ENCODE measurements at regions of chr1 and their contacts with region 1.

Region 1: GRCh38 chr1:18902523-18903290 is at the start of gene ALDH4A1:
- DNase-seq: peak; percentile 98
- ATAC-seq: peak; percentile 89
- H3K4me3 ChIP-seq: peak within 1 kb of the TSS; percentile 81 to 95 (median 94)
- H3K27ac ChIP-seq: peak within 1 kb of the TSS; percentile 95
- H3K4me1 ChIP-seq: peaks cover 45% of the 10 kb centered on the region
- H3K27me3 ChIP-seq: no peaks in the 10 kb centered on the region
- CTCF ChIP-seq: peak; percentile 47
- EP300 ChIP-seq: no peak
- POLR2A ChIP-seq: peak; percentile 75 to 77
- RAD21 ChIP-seq: 0 out of 2 replicates have a peak, but pooled peaks have one; percentile 7
- total RNA-seq, gene ALDH4A1: 58.5 and 76.4 TPM in 2 replicates

Region 2: GRCh38 chr1:18883636-18884418 is 18.9 kb before region 1 on chr1:
- CTCF ChIA-PET with region 1: interaction called, 14 read pairs
- POLR2A ChIA-PET with region 1: interaction called, 13 read pairs
- in situ Hi-C with region 1: no loop called
- intact Hi-C with region 1: loop called (anchors 2 kb)
- DNase-seq: peak; percentile 51
- ATAC-seq: peak; percentile 79
- H3K4me3 ChIP-seq: no peak overlapping the region
- H3K27ac ChIP-seq: no peak overlapping the region
- H3K4me1 ChIP-seq: no peaks in the 10 kb centered on the region
- H3K27me3 ChIP-seq: no peaks in the 10 kb centered on the region
- CTCF ChIP-seq: peak; percentile 88
- EP300 ChIP-seq: no peak
- POLR2A ChIP-seq: no peak
- RAD21 ChIP-seq: peak; percentile 89

Region 3: DNA sequence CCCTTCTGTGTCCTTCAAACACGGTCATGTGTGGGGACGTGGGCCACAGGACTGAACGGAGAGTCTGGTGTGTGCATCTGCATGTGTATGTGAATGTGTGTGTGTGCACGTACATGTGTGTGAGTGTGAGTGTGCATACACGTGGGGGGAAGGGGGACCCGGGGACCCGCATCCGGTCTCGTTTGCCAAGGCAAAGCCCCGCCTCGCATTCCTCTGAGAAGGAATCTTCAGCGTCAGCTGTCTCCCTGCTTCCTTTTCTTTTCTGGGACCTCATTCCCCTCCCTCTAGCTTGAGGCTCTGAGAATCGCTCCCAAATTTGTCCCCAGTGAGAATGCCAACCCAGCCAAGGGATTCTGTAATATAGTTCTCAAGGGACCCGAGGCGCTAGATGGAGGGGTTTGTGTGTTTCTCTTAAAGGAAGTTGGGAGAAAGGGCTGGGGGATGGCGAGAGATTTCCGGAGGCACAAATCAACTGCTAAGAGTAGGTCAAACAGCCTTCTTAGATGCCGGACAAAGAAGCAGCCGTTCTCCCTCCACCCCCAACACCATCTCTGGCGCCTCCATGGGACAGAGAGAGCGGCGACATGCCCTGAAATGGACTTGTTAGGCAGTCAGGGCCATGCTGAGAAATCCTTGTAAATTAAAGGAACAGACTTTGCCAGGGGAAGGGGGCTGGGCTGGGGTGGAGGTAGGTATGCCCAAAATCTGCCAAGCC is 47.1 kb after region 1 on chr1:
- CTCF ChIA-PET with region 1: no interaction called
- POLR2A ChIA-PET with region 1: interaction called, 4 read pairs
- in situ Hi-C with region 1: loop called (anchors 5 kb)
- intact Hi-C with region 1: loop called (anchors 2 kb)
- DNase-seq: peak; percentile 48
- ATAC-seq: peak; percentile 54
- H3K4me3 ChIP-seq: peak overlapping the region; percentile 53 to 75 (median 73)
- H3K27ac ChIP-seq: peak overlapping the region; percentile 93
- H3K4me1 ChIP-seq: peaks cover 95% of the 10 kb centered on the region
- H3K27me3 ChIP-seq: no peaks in the 10 kb centered on the region
- CTCF ChIP-seq: peak; percentile 45
- EP300 ChIP-seq: no peak
- POLR2A ChIP-seq: no peak
- RAD21 ChIP-seq: no peak; the same call in 1 of the 2 replicates

Region 4: DNA sequence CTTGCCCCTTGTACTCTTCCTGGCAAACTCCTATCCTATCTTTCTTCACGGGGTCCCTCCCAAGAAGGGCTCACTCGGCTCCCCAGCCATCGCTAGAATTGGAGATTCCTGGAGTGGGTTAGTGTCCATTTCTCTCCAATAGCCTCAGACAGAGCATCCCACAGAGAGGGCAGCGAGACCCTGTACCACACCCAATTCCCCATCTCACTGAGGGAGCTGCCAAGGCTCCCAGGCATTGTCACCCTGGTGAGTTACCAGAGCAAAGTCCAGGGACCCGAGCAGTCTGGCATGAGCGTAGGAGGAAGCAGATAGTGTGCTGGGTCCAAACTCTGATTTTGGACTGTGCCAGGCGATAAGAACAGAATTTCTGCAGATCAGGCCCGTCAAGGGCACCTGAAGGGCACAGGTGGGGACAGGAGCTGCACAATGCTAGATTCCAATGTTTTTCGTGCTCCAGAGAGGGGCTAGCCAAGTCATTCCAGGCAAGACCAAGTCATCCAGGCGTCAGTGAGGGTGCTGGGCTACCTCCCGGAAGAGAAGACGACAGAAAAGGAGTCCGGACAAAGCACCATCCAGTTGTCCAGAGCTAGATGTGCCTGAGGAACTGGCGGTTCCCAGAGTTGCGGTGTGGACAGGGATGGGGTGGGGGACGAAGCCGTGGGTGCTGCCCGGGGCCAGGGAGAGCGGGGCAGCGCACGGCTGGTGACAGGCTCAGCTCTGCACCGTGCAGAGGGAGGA is 370.6 kb after region 1 on chr1:
- CTCF ChIA-PET with region 1: no interaction called
- POLR2A ChIA-PET with region 1: no interaction called
- in situ Hi-C with region 1: no loop called
- intact Hi-C with region 1: no loop called
- DNase-seq: no peak
- ATAC-seq: no peak
- H3K4me3 ChIP-seq: no peak overlapping the region
- H3K27ac ChIP-seq: no peak overlapping the region
- H3K4me1 ChIP-seq: peaks cover 42% of the 10 kb centered on the region
- H3K27me3 ChIP-seq: no peaks in the 10 kb centered on the region
- CTCF ChIP-seq: no peak
- EP300 ChIP-seq: no peak
- POLR2A ChIP-seq: no peak
- RAD21 ChIP-seq: no peak